ENCODE measurements at regions of chr20 and their contacts with region 1.

Region 1: DNA sequence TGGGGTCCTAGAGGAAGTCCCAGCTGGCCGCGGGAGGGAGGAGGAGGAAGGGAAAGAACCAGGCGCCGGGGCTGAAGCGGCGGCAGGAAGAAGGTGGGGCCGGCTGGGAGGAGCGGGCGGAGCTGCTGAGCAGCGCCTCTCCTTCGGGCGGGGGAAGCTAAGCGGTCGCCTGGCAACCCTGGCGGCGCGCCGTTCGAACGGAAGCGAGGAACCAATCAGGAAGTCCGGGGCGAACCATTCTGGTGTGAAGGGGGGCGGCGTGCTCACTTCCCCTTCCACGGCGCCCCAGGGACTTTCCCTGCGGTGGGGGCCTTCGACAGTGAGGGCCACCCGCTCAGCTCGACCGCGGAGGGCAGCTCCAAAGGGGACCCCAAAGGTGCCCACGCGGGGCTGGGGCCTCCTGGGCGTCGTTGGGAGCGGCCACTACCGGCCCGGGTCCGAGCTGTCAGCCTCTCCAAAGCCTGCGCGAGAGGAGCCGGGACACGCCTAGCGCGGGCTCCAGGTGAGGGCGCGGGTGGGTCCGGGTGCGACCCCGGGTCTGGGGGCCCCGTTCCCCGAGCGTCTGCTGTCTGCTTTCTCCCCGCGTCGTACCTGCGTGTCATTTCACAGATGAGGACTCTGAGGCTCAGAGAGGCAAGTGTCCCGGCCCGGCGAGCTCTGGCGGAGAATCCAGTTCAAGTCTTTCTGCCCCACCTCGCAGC is at the start of gene FAM110A:
- DNase-seq: peak; percentile 97
- ATAC-seq: peak; percentile 94
- H3K4me3 Mint-ChIP-seq: peak within 1 kb of the TSS; percentile 89
- H3K27ac Mint-ChIP-seq: peak within 1 kb of the TSS; percentile 85
- H3K4me1 Mint-ChIP-seq: peaks cover 36% of the 10 kb centered on the region
- H3K27me3 Mint-ChIP-seq: no peaks in the 10 kb centered on the region
- CTCF ChIP-seq: no peak
- total RNA-seq, gene FAM110A: 20.5 to 23.1 TPM

Region 2: GRCh38 chr20:844473-845225 is 11.0 kb after region 1 on chr20:
- CTCF ChIA-PET with region 1: interaction called, 9 read pairs
- POLR2A ChIA-PET with region 1: interaction called, 8 read pairs
- intact Hi-C with region 1: loop called (anchors 1 kb)
- DNase-seq: peak; percentile 95
- ATAC-seq: peak; percentile 93
- H3K4me3 Mint-ChIP-seq: peak overlapping the region; percentile 84
- H3K27ac Mint-ChIP-seq: peak overlapping the region; percentile 75
- H3K4me1 Mint-ChIP-seq: peaks cover 43% of the 10 kb centered on the region
- H3K27me3 Mint-ChIP-seq: no peaks in the 10 kb centered on the region
- CTCF ChIP-seq: peak; percentile 26

Measured in activated CD8-positive, alpha-beta T cell treated with anti-CD3 and anti-CD28 coated beads for 36 hours (primary cell).